ENCODE measurements at regions of chr11 and their contacts with region 1.

Region 1: GRCh38 chr11:63888170-63889086 is 28.5 kb downstream of the RCOR2 start:
- DNase-seq: peak; percentile 49 to 87 (median 76)
- ATAC-seq: peak; percentile 85
- H3K4me3 ChIP-seq: peak overlapping the region; percentile 67 to 72
- H3K4me3 Mint-ChIP-seq: peak overlapping the region; percentile 96
- H3K27ac ChIP-seq: peak overlapping the region; percentile 47 to 87
- H3K27ac Mint-ChIP-seq: peak overlapping the region; percentile 92
- H3K4me1 ChIP-seq: peaks cover 62% of the 10 kb centered on the region
- H3K4me1 Mint-ChIP-seq: peaks cover 83% of the 10 kb centered on the region
- H3K27me3 ChIP-seq: no peaks in the 10 kb centered on the region
- H3K27me3 Mint-ChIP-seq: no peaks in the 10 kb centered on the region
- CTCF ChIP-seq: no peak

Region 2: DNA sequence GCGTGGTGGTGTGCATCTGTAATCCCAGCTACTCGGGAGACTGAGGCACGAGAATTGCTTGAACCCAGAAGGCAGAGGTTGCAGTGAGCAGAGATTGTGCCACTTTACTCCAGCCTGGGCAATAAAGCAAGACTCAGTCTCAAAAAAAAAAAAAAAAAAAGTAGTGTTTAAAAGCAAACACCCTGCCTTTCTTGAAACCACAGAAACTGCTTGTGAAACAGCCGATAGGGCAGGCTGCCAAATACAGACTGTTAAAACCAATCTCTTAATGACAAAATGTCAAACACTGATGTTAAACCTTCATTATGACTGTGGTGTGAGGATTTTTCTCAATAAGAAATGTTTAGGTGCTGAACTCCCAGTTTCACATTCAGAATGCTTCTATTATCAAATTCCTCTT is 22.2 kb before region 1 on chr11:
- CTCF ChIA-PET with region 1: interaction called, 7 read pairs
- POLR2A ChIA-PET with region 1: interaction called, 6 read pairs
- intact Hi-C with region 1: loop called (anchors 1 to 2 kb)
- DNase-seq: peak; percentile 42 to 92 (median 77)
- ATAC-seq: peak; percentile 70
- H3K4me3 ChIP-seq: no peak overlapping the region
- H3K4me3 Mint-ChIP-seq: peak overlapping the region; percentile 58
- H3K27ac ChIP-seq: peak overlapping the region in 1 of 2 experiments; percentile 49
- H3K27ac Mint-ChIP-seq: peak overlapping the region; percentile 79
- H3K4me1 ChIP-seq: peaks cover 74% of the 10 kb centered on the region
- H3K4me1 Mint-ChIP-seq: peaks cover 80% of the 10 kb centered on the region
- H3K27me3 ChIP-seq: no peaks in the 10 kb centered on the region
- H3K27me3 Mint-ChIP-seq: no peaks in the 10 kb centered on the region
- CTCF ChIP-seq: no peak

Region 3: GRCh38 chr11:63871962-63872799 is 16.2 kb before region 1 on chr11:
- CTCF ChIA-PET with region 1: interaction called, 7 read pairs
- POLR2A ChIA-PET with region 1: interaction called, 5 read pairs
- intact Hi-C with region 1: loop called (anchors 1 to 2 kb)
- DNase-seq: peak in 7 of 9 experiments; percentile 9 to 71 (median 44)
- ATAC-seq: peak; percentile 80
- H3K4me3 ChIP-seq: no peak overlapping the region
- H3K4me3 Mint-ChIP-seq: peak overlapping the region; percentile 29
- H3K27ac ChIP-seq: peak overlapping the region in 1 of 2 experiments; percentile 51
- H3K27ac Mint-ChIP-seq: peak overlapping the region; percentile 72
- H3K4me1 ChIP-seq: peaks cover 77% of the 10 kb centered on the region
- H3K4me1 Mint-ChIP-seq: peaks cover 83% of the 10 kb centered on the region
- H3K27me3 ChIP-seq: no peaks in the 10 kb centered on the region
- H3K27me3 Mint-ChIP-seq: no peaks in the 10 kb centered on the region
- CTCF ChIP-seq: no peak

Region 4: DNA sequence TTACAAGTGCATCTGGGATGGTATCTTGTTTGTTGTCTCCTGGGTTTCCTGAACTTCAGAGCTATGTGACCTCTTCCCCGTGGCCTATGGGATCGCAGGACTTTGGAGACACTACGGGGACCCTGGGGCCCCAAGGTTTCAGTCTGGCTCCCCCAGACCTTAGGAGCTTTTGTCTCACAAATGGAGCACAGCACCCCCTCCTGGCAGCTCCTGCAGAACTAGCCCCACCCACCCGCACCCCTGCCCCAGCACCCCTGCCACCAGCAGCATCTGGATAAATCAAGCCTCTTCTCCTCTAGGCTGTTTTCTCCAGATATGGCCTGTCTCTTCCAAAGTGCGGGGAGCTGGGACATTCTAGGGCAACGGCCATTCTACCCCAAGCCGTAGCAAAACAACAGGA is 18.2 kb after region 1 on chr11:
- CTCF ChIA-PET with region 1: interaction called, 11 read pairs
- POLR2A ChIA-PET with region 1: interaction called, 5 read pairs
- intact Hi-C with region 1: no loop called
- DNase-seq: peak; percentile 28 to 74 (median 68)
- ATAC-seq: peak; percentile 77
- H3K4me3 ChIP-seq: no peak overlapping the region
- H3K4me3 Mint-ChIP-seq: no peak overlapping the region
- H3K27ac ChIP-seq: no peak overlapping the region
- H3K27ac Mint-ChIP-seq: no peak overlapping the region
- H3K4me1 ChIP-seq: no peaks in the 10 kb centered on the region
- H3K4me1 Mint-ChIP-seq: peaks cover 3% of the 10 kb centered on the region
- H3K27me3 ChIP-seq: no peaks in the 10 kb centered on the region
- H3K27me3 Mint-ChIP-seq: no peaks in the 10 kb centered on the region
- CTCF ChIP-seq: peak; percentile 38

Measured in CD8-positive, alpha-beta T cell (primary cell).